ENCODE measurements at regions of chr5 and their contacts with region 1.

Region 1: DNA sequence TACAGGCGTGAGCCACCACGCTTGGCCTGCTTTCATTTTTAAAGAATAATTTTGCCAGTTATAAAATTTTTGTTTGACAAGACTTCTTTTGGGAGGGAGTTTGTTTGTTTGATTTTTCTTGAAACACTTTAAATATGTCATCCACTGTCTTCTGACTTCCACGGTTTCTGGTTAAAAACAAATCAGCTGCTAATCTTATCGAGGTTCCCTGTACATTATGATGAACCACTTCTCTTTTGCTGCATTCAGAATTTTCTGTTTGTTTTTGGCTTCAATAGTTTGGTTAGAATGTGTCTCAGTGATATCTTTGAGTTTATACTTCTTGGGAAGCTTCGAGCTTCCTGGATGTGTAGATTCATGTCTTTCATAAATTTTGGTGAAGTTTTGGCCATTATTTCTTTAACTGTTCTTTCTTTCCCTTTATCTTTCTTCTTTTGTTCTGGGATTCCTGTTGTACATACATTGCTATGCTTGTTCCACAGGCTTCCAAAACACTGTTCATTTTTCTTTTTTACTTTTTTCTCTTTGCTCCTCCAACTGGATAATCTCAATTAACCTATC is 60.8 kb downstream of the MSX2 start:
- DNase-seq: no peak
- H3K4me3 ChIP-seq: no peak overlapping the region
- H3K27ac ChIP-seq: no peak overlapping the region
- H3K4me1 ChIP-seq: no peaks in the 10 kb centered on the region
- H3K27me3 ChIP-seq: no peaks in the 10 kb centered on the region
- CTCF ChIP-seq: no peak
- POLR2A ChIP-seq: no peak

Region 2: GRCh38 chr5:174355208-174355612 is 430.0 kb before region 1 on chr5:
- intact Hi-C with region 1: loop called (anchors 10 kb)
- DNase-seq: no peak
- H3K4me3 ChIP-seq: no peak overlapping the region
- H3K27ac ChIP-seq: no peak overlapping the region
- H3K4me1 ChIP-seq: no peaks in the 10 kb centered on the region
- H3K27me3 ChIP-seq: no peaks in the 10 kb centered on the region
- CTCF ChIP-seq: no peak
- POLR2A ChIP-seq: no peak

Region 3: GRCh38 chr5:174816860-174817259 is 31.7 kb after region 1 on chr5:
- intact Hi-C with region 1: no loop called
- DNase-seq: no peak
- H3K4me3 ChIP-seq: no peak overlapping the region
- H3K27ac ChIP-seq: no peak overlapping the region
- H3K4me1 ChIP-seq: no peaks in the 10 kb centered on the region
- H3K27me3 ChIP-seq: no peaks in the 10 kb centered on the region
- CTCF ChIP-seq: no peak
- POLR2A ChIP-seq: no peak

Measured in breast epithelium (tissue), 4 donors.